CD4-positive, alpha-beta T cell (primary cell): ENCODE measurements at regions of chr14 and their contacts with region 1.

Region 1: DNA sequence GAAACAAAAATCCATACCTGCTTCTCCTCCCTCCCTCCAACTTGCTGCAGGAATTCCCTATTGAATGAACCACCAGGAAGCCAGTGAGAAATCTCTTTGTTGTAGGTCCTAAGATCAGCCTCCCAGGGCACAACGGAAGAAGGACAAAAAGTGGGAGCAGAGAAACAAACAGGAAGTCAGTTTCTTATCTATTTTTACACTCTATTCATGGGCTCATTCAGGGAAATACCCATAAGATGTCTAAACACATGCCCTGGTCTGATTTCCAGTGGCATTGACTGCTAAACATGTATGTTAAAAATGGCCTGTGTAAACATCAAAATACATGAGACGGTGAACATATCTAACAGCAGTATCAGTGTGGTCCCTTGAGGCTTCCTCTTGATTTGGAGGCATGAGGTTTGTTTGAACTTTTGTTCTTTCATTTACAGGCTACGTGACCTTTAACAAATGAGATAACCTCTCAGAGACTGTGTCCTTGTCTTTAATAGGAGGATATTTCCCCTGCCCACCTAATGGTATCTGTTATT is 18.8 kb downstream of the GPR65 start:
- DNase-seq: peak in 3 of 14 experiments; percentile 43 to 63 (median 46)
- ATAC-seq: peak; percentile 51
- H3K4me3 ChIP-seq: no peak overlapping the region
- H3K4me3 Mint-ChIP-seq: no peak overlapping the region
- H3K27ac ChIP-seq: no peak overlapping the region
- H3K27ac Mint-ChIP-seq: peak overlapping the region; percentile 48
- H3K4me1 ChIP-seq: peaks cover 38% of the 10 kb centered on the region
- H3K4me1 Mint-ChIP-seq: peaks cover 93% of the 10 kb centered on the region
- H3K27me3 ChIP-seq: no peaks in the 10 kb centered on the region
- H3K27me3 Mint-ChIP-seq: no peaks in the 10 kb centered on the region
- CTCF ChIP-seq: no peak

Region 2: GRCh38 chr14:88060576-88060975 is 36.9 kb after region 1 on chr14:
- CTCF ChIA-PET with region 1: no interaction called
- POLR2A ChIA-PET with region 1: no interaction called
- intact Hi-C with region 1: no loop called
- DNase-seq: no peak
- ATAC-seq: no peak
- H3K4me3 ChIP-seq: no peak overlapping the region
- H3K4me3 Mint-ChIP-seq: no peak overlapping the region
- H3K27ac ChIP-seq: no peak overlapping the region
- H3K27ac Mint-ChIP-seq: no peak overlapping the region
- H3K4me1 ChIP-seq: no peaks in the 10 kb centered on the region
- H3K4me1 Mint-ChIP-seq: no peaks in the 10 kb centered on the region
- H3K27me3 ChIP-seq: no peaks in the 10 kb centered on the region
- H3K27me3 Mint-ChIP-seq: no peaks in the 10 kb centered on the region
- CTCF ChIP-seq: no peak

Region 3: DNA sequence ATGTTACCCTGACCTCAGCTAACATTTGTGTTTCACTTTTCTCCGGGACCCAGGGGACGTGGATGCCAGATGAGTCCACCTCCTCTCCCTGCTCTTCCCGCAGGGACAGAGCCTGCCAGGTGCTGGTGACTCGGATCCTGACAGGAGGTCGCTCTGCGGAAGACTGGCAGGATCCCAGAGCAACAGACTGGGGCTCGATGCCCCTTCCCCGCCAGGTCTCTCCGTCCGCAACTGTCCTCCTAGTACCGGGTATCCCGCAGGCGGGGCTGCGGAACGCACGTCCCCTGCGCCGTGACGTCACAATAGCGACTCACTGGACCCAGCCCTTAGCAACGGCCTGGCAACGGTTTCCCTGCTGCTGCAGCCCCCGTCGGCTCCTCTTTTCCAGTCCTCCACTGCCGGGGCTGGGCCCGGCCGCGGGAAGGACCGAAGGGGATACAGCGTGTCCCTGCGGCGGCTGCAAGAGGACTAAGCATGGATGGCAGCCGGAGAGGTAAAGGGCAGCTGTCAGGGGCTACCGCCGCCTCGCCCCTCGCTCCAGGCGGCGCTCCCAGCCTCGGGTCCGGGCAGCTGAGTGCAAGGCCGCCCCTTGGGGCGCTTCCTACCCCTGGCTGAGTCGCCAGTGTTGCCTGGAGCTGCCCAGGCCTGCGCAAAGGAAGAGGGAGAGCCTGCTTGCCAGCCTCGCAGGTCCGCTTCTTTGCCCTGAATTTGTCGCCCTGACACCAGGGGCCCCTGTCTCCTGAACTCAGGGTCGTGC is 361.8 kb after region 1 on chr14 and contains the start of gene SPATA7:
- CTCF ChIA-PET with region 1: no interaction called
- POLR2A ChIA-PET with region 1: no interaction called
- intact Hi-C with region 1: loop called in 1 of 2 experiments (anchors 10 kb)
- DNase-seq: peak; percentile 56 to 88 (median 71)
- ATAC-seq: peak; percentile 90
- H3K4me3 ChIP-seq: peak within 1 kb of the TSS; percentile 91
- H3K4me3 Mint-ChIP-seq: peak within 1 kb of the TSS; percentile 97
- H3K27ac ChIP-seq: peak within 1 kb of the TSS; percentile 23 to 47
- H3K27ac Mint-ChIP-seq: peak within 1 kb of the TSS; percentile 43
- H3K4me1 ChIP-seq: peaks cover 9% of the 10 kb centered on the region
- H3K4me1 Mint-ChIP-seq: peaks cover 24% of the 10 kb centered on the region
- H3K27me3 ChIP-seq: no peaks in the 10 kb centered on the region
- H3K27me3 Mint-ChIP-seq: no peaks in the 10 kb centered on the region
- CTCF ChIP-seq: no peak
- total RNA-seq, gene SPATA7: 1.2 to 1.3 TPM